CD8-positive, alpha-beta T cell (primary cell): ENCODE measurements at regions of chr6 and their contacts with region 1.

Region 1: DNA sequence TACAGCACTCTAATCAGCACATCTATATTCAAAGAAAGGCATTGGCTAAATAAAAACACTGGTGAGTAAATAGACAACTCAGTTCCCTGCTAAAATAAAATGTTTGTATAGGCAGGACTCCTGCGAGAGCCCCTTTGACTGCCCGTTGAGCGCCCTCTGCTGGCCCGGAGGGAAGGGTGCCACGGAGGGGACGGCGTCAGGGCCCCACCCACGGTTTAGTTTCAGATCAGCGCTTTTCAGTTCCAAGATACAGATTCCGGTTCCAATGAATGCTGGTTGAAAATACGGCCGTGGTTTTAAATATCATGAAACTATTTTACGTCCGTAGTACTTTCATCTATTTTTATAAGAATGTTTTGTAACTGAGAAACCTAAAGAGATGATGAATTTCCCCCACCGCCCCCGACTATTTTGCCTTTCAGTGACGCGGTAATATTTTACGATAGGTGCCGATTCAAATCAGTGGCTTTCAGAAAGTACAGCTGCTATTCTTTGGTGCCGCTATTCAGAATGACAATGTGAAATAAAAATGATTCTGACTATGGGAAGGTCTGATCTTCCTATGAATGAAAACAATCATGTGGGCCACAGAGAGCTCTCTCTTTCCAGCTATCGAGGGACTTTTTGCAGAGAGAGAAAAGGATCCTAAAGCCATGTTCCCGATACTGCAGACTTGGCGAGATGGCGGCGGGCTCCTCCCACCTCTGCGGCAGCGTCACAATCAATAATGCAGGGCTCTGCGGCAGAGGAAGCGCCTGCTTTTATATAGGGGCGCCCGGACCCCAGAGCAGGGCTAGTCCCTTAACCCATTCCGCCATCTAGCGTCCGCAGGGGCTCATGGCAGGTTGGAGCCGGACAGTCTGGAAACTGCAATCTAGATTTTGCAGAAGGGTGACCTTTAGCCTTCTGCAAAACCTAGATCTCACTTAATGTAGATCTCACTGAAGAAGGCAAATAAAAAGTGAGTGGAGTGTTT is 10.6 kb upstream of the CCN6 start:
- DNase-seq: peak; percentile 87 to 96 (median 93)
- ATAC-seq: peak; percentile 93
- H3K4me3 ChIP-seq: peak overlapping the region; percentile 56 to 65
- H3K4me3 Mint-ChIP-seq: peak overlapping the region; percentile 97
- H3K27ac ChIP-seq: peak overlapping the region; percentile 83 to 88
- H3K27ac Mint-ChIP-seq: peak overlapping the region; percentile 99
- H3K4me1 ChIP-seq: peaks cover 6% of the 10 kb centered on the region
- H3K4me1 Mint-ChIP-seq: peaks cover 21% of the 10 kb centered on the region
- H3K27me3 ChIP-seq: no peaks in the 10 kb centered on the region
- H3K27me3 Mint-ChIP-seq: no peaks in the 10 kb centered on the region
- CTCF ChIP-seq: peak; percentile 82

Region 2: DNA sequence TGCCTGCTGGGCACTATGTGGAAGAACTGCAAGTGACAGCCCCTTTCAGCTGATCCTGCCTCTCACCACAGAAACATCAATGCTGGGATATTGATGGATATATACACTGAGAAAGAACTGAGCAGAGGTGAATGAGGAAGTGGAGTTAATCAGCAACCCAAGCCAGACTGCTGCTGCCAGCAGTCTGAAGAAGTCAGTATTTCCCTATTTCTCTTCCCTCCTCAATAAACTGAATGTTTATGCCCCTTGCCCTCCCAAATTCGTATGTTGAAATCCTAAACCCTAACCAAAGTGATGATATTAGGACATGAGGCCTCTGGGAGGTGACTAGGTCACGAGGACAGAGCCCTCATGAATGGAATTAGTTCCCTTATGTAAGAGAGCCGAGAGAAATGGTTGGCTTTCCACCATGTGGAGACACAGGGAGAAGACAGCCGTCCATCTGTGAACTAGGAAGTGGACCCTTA is 1304.4 kb before region 1 on chr6:
- CTCF ChIA-PET with region 1: no interaction called
- POLR2A ChIA-PET with region 1: no interaction called
- intact Hi-C with region 1: no loop called
- DNase-seq: peak in 1 of 9 experiments; percentile 10
- ATAC-seq: no peak
- H3K4me3 ChIP-seq: no peak overlapping the region
- H3K4me3 Mint-ChIP-seq: no peak overlapping the region
- H3K27ac ChIP-seq: no peak overlapping the region
- H3K27ac Mint-ChIP-seq: no peak overlapping the region
- H3K4me1 ChIP-seq: no peaks in the 10 kb centered on the region
- H3K4me1 Mint-ChIP-seq: no peaks in the 10 kb centered on the region
- H3K27me3 ChIP-seq: no peaks in the 10 kb centered on the region
- H3K27me3 Mint-ChIP-seq: no peaks in the 10 kb centered on the region
- CTCF ChIP-seq: no peak

Region 3: GRCh38 chr6:111011360-111012142 is 1031.8 kb before region 1 on chr6:
- CTCF ChIA-PET with region 1: interaction called, 4 read pairs
- POLR2A ChIA-PET with region 1: no interaction called
- intact Hi-C with region 1: loop called in 1 of 2 experiments (anchors 5 kb)
- DNase-seq: peak in 2 of 9 experiments; percentile 45 to 62
- ATAC-seq: peak; percentile 69
- H3K4me3 ChIP-seq: no peak overlapping the region
- H3K4me3 Mint-ChIP-seq: no peak overlapping the region
- H3K27ac ChIP-seq: no peak overlapping the region
- H3K27ac Mint-ChIP-seq: no peak overlapping the region
- H3K4me1 ChIP-seq: no peaks in the 10 kb centered on the region
- H3K4me1 Mint-ChIP-seq: peaks cover 4% of the 10 kb centered on the region
- H3K27me3 ChIP-seq: no peaks in the 10 kb centered on the region
- H3K27me3 Mint-ChIP-seq: no peaks in the 10 kb centered on the region
- CTCF ChIP-seq: peak; percentile 71

Region 4: GRCh38 chr6:111483736-111484632 is 559.3 kb before region 1 on chr6:
- CTCF ChIA-PET with region 1: interaction called, 3 read pairs
- POLR2A ChIA-PET with region 1: interaction called, 3 read pairs
- intact Hi-C with region 1: loop called (anchors 1 kb)
- DNase-seq: peak in 6 of 9 experiments; percentile 56 to 93 (median 78)
- ATAC-seq: peak; percentile 24
- H3K4me3 ChIP-seq: peak overlapping the region; percentile 88 to 92
- H3K4me3 Mint-ChIP-seq: peak overlapping the region; percentile 99
- H3K27ac ChIP-seq: peak overlapping the region; percentile 89 to 91
- H3K27ac Mint-ChIP-seq: peak overlapping the region; percentile 99
- H3K4me1 ChIP-seq: peaks cover 12% of the 10 kb centered on the region
- H3K4me1 Mint-ChIP-seq: peaks cover 45% of the 10 kb centered on the region
- H3K27me3 ChIP-seq: no peaks in the 10 kb centered on the region
- H3K27me3 Mint-ChIP-seq: no peaks in the 10 kb centered on the region
- CTCF ChIP-seq: no peak

Region 5: DNA sequence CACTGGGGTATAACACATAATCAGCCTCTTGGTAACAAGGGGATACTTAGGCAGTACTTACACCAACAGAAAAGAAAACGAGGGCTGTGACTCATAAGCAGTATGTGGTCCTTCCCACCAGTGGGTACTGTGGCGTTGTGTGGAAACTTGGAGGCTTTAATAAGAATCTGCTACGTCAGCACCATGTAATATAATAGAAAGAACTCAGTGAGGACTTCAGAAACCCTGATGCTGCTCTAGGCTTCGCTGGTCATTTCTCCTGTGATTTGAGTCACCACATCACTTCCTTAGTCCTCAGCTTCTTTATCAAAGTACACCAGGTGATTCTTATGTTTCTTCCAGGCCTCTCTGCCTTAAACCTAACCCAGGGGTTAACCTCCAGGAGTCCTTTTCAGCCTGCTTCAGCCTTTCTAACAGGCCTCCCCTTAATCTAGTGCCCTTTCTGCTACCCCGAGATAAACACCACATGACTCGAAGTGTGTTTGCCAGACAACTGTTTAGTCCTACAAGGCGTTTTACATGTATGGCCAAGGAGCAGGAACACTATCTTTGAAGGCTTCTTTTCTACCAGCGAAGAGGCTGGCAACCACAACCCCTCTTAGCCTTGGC is 238.6 kb before region 1 on chr6:
- CTCF ChIA-PET with region 1: interaction called, 5 read pairs
- POLR2A ChIA-PET with region 1: no interaction called
- intact Hi-C with region 1: loop called (anchors 1 to 2 kb)
- DNase-seq: peak; percentile 27 to 92 (median 62)
- ATAC-seq: peak; percentile 73
- H3K4me3 ChIP-seq: no peak overlapping the region
- H3K4me3 Mint-ChIP-seq: peak overlapping the region; percentile 60
- H3K27ac ChIP-seq: peak overlapping the region; percentile 16 to 84
- H3K27ac Mint-ChIP-seq: peak overlapping the region; percentile 97
- H3K4me1 ChIP-seq: peaks cover 70% of the 10 kb centered on the region
- H3K4me1 Mint-ChIP-seq: peaks cover 95% of the 10 kb centered on the region
- H3K27me3 ChIP-seq: no peaks in the 10 kb centered on the region
- H3K27me3 Mint-ChIP-seq: no peaks in the 10 kb centered on the region
- CTCF ChIP-seq: peak; percentile 53

Region 6: DNA sequence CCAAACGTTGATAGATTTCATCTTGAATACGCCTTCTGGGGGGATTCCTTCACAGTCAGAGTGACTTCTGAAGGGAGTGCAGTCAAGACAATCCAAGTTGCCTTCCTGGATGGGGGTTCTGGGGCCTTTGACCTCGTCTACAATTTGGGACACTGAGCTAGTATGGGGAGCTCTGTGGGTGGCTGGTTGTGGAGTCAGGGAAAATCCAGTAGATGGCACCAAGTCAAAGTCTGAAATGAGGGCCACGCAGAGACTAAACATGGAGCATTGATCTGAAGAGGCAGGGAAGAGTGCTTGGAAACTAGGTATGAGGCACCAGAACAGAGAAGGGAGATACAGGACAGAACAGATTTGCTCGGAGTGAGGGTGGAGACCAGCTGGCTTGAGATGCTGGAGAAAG is 33.0 kb before region 1 on chr6:
- CTCF ChIA-PET with region 1: interaction called, 233 read pairs
- POLR2A ChIA-PET with region 1: interaction called, 22 read pairs
- intact Hi-C with region 1: loop called (anchors 1 kb)
- DNase-seq: peak in 3 of 9 experiments; percentile 45 to 63 (median 61)
- ATAC-seq: peak; percentile 57
- H3K4me3 ChIP-seq: no peak overlapping the region
- H3K4me3 Mint-ChIP-seq: no peak overlapping the region
- H3K27ac ChIP-seq: no peak overlapping the region
- H3K27ac Mint-ChIP-seq: no peak overlapping the region
- H3K4me1 ChIP-seq: no peaks in the 10 kb centered on the region
- H3K4me1 Mint-ChIP-seq: peaks cover 9% of the 10 kb centered on the region
- H3K27me3 ChIP-seq: no peaks in the 10 kb centered on the region
- H3K27me3 Mint-ChIP-seq: no peaks in the 10 kb centered on the region
- CTCF ChIP-seq: no peak

Region 7: DNA sequence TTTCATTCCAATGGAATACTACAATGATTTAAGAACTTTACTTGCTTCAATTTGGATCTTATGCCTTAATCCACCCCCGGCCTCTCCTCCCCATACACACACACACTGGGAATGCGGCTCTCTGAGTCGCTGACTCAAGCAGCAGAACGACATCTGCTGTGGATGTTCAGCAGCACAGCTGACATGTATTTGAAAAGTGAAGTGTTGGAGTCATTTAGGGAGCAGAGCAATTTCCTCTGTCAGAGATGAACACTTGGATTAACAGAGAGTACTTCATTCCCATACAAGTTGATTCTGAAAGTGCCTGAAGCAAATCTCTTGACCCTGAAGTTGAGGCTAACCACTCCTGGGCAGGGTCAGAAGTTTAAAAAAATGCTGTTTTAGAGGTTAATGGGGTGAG is 238.9 kb after region 1 on chr6:
- CTCF ChIA-PET with region 1: no interaction called
- POLR2A ChIA-PET with region 1: no interaction called
- intact Hi-C with region 1: no loop called
- DNase-seq: no peak
- ATAC-seq: no peak
- H3K4me3 ChIP-seq: no peak overlapping the region
- H3K4me3 Mint-ChIP-seq: no peak overlapping the region
- H3K27ac ChIP-seq: no peak overlapping the region
- H3K27ac Mint-ChIP-seq: no peak overlapping the region
- H3K4me1 ChIP-seq: peaks cover 18% of the 10 kb centered on the region
- H3K4me1 Mint-ChIP-seq: peaks cover 15% of the 10 kb centered on the region
- H3K27me3 ChIP-seq: peaks cover 0 to 11% of the 10 kb centered on the region in 2 experiments
- H3K27me3 Mint-ChIP-seq: peaks cover 21% of the 10 kb centered on the region
- CTCF ChIP-seq: no peak